Heart right ventricle (tissue), 16 donors: ENCODE measurements at regions of chr2 and their contacts with region 1.

Region 1: GRCh38 chr2:182866461-182867406 is at the start of gene FRZB:
- DNase-seq: peak; percentile 61 to 78
- ATAC-seq: peak; percentile 81 to 91 (median 88)
- H3K4me3 ChIP-seq: peak within 1 kb of the TSS; percentile 4 to 66 (median 50)
- H3K27ac ChIP-seq: peak within 1 kb of the TSS in 9 of 10 donors; percentile 11 to 64 (median 51)
- H3K4me1 ChIP-seq: peaks cover 0 to 42% (median 12%) of the 10 kb centered on the region in 9 donors
- H3K27me3 ChIP-seq: peaks cover 0 to 38% (median 6%) of the 10 kb centered on the region in 7 donors
- CTCF ChIP-seq: peak in 1 of 9 donors; percentile 12
- total RNA-seq, gene FRZB: 0.85 to 5.7 (median 2.3) TPM

Region 2: DNA sequence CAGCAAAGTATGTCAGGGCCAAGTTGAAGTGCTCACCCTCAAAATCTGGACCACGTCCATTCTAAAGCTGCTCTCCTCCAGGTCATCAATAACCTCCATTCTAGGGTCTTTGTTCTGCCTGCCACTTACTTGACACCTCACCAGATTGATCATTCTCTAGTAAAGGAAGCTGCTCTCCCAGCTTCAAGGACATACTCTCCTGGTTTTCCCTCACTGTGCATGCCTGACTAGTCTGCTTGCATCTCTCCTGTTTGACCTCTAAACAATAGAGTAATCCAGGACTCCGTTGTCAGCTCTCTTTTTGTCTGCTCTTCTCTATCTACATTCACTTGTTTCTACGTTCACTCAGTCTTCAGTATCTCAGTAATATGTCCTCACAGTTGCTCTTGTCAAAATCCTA is 59.4 kb before region 1 on chr2:
- intact Hi-C with region 1: loop called in 1 of 10 experiments (anchors 10 kb)
- DNase-seq: no peak
- ATAC-seq: no peak
- H3K4me3 ChIP-seq: no peak overlapping the region
- H3K27ac ChIP-seq: no peak overlapping the region
- H3K4me1 ChIP-seq: no peaks in the 10 kb centered on the region
- H3K27me3 ChIP-seq: no peaks in the 10 kb centered on the region
- CTCF ChIP-seq: no peak